Ovary (tissue), 10 donors: ENCODE measurements at regions of chr2 and their contacts with region 1.

Region 1: GRCh38 chr2:72150157-72150865 is 2.6 kb upstream of the CYP26B1 start:
- DNase-seq: peak; percentile 69 to 81 (median 78)
- H3K4me3 ChIP-seq: no peak overlapping the region
- H3K27ac ChIP-seq: no peak overlapping the region
- H3K4me1 ChIP-seq: peaks cover 6% of the 10 kb centered on the region
- H3K27me3 ChIP-seq: no peaks in the 10 kb centered on the region
- CTCF ChIP-seq: peak; percentile 70 to 85 (median 79)
- EP300 ChIP-seq: no peak
- POLR2A ChIP-seq: no peak

Region 2: DNA sequence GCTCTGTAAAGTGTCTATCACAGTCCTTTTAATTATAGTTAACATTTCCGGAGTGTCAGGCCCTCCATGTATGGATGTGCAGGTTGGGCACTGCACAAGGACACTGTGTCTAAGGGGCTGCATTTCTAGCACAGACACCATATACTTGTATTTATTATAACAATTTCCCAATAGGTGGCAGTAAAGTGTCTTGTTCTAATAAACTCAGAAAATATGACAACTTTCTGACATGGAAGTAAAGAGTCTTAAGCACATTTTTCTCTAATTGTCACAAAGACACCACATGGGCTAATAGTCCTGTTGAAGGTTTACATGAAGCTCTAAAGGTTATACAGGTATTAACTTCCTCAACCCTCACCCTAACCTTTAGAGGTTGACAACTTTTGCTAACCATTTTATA is 540.4 kb before region 1 on chr2:
- intact Hi-C with region 1: loop called in 1 of 4 experiments (anchors 10 kb)
- DNase-seq: peak in 1 of 5 donors; percentile 4
- H3K4me3 ChIP-seq: no peak overlapping the region
- H3K27ac ChIP-seq: no peak overlapping the region
- H3K4me1 ChIP-seq: peaks cover 3% of the 10 kb centered on the region
- H3K27me3 ChIP-seq: no peaks in the 10 kb centered on the region
- CTCF ChIP-seq: no peak
- EP300 ChIP-seq: no peak
- POLR2A ChIP-seq: no peak

Region 3: DNA sequence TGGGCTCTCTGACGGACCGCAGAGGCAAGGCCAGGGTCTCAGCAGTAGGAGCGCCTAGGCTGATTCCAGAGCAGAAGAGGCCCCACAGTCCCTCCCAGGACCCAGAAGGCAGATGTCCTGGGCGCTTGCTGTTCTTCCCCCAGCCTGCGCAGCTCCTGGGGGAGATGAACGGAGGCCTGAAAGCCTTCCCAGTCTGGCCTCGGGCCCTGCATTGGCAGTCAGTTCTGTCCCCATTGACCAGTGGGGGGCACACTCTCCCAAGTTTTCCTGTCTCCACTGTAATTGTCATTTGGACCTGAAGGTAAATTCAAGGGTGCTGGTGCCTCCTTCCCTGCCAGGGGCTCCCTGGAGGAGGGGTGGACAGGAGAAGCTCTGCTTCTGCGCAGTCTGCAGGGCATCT is 348.3 kb before region 1 on chr2:
- intact Hi-C with region 1: loop called in 1 of 4 experiments (anchors 5 kb)
- DNase-seq: no peak
- H3K4me3 ChIP-seq: no peak overlapping the region
- H3K27ac ChIP-seq: no peak overlapping the region
- H3K4me1 ChIP-seq: no peaks in the 10 kb centered on the region
- H3K27me3 ChIP-seq: no peaks in the 10 kb centered on the region
- CTCF ChIP-seq: no peak
- EP300 ChIP-seq: no peak
- POLR2A ChIP-seq: no peak

Region 4: GRCh38 chr2:72126186-72127100 is 23.9 kb before region 1 on chr2:
- intact Hi-C with region 1: no loop called
- DNase-seq: no peak
- H3K4me3 ChIP-seq: no peak overlapping the region
- H3K27ac ChIP-seq: no peak overlapping the region
- H3K4me1 ChIP-seq: peaks cover 2% of the 10 kb centered on the region
- H3K27me3 ChIP-seq: no peaks in the 10 kb centered on the region
- CTCF ChIP-seq: no peak
- EP300 ChIP-seq: no peak
- POLR2A ChIP-seq: no peak

Region 5: DNA sequence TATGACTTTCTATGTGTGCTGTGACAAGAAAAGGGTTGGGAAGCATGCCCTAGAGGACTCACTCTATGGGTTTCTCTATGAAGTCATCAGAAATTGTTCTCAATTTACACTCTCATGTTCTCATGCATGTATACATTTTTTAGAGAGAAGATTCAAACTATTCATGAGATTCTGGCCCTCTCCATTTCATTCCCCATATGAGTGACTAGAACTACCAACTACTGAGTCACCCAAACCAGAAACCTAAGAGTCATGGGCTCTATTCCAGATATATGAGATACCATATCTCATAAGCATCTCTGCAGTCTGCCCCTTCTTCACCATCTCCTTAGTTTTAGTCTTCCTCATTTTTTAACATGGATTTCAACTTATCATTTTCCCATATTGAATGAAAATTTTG is 587.8 kb after region 1 on chr2:
- intact Hi-C with region 1: loop called in 1 of 4 experiments (anchors 10 kb)
- DNase-seq: no peak
- H3K4me3 ChIP-seq: no peak overlapping the region
- H3K27ac ChIP-seq: no peak overlapping the region
- H3K4me1 ChIP-seq: peaks cover 1% of the 10 kb centered on the region
- H3K27me3 ChIP-seq: no peaks in the 10 kb centered on the region
- CTCF ChIP-seq: no peak
- EP300 ChIP-seq: no peak
- POLR2A ChIP-seq: no peak